ENCODE measurements at regions of chr2 and their contacts with region 1.

Region 1: DNA sequence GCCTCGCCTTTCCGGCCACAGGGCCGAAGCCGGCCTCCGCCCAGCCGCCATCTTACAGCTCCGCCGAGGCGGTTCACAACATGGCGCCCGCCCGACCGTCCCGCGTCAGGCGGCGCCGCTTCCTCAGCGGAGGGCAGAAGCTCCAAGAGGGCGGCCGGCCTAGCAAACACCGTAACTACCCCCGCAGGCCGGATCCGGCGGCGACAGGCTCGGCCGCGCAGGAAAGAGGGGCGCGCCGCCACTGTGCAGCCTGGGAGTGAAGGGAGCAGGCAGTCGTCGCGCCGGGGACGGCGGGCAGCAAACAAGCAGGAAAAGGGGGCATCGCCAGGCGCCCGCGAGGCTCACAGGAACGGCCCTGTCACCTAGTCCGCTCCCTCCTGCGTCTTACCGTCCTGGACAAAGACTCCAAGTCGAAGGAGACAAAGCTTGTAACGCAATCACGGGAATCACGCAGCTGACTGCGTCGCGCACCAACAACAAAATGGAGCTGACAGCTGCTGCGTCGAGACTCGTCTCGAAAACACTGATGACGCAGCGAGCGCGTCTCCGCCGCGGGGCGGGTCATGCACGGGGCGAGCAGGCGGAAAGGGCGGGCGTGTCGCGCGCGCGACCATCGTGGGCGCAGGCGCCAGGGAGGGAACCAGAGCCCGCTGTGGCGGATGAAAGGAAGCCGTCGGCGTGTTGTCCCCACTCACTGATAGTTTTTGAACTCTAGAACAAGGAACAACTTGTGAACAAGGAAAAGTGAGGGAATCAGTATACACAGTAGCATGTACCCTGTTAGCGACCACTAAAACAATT is at the start of gene CLK1:
- DNase-seq: peak in 1 of 2 experiments; percentile 89
- H3K4me3 ChIP-seq: peak within 1 kb of the TSS; percentile 87 to 99 (median 94)
- H3K27ac ChIP-seq: peak within 1 kb of the TSS; percentile 95
- H3K4me1 ChIP-seq: peaks cover 0 to 5% (median 0%) of the 10 kb centered on the region in 4 experiments; a peak in 1 of 7 replicates
- H3K27me3 ChIP-seq: no peaks in the 10 kb centered on the region; a peak in 1 of 7 replicates
- CTCF ChIP-seq: no peak
- EP300 ChIP-seq: no peak; a peak in 1 of 3 replicates
- POLR2A ChIP-seq: peak; percentile 89 to 94
- RAD21 ChIP-seq: no peak
- total RNA-seq, gene CLK1: 33.9 and 35.2 TPM in 2 replicates

Region 2: DNA sequence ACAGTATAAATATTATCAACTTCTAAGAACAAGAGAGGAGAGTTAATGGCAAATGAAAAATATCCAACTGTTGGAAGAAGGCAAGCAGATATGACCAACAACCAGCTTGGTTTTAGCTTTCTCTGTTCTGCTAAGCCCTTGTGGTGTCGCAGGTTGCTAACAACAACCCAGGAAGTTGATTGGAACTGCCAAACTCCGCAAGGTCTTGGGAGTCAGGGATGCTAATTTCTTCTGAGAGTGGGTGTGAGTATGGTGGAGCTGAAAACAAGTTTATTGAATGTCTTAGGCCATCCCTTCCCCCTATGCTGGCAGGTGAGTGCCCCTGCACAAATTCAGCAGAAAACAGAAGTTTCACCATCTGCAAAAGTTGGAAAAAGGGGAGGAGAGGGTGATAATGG is 35.1 kb before region 1 on chr2:
- CTCF ChIA-PET with region 1: interaction called, 3 read pairs
- POLR2A ChIA-PET with region 1: interaction called, 12 read pairs
- DNase-seq: no peak
- H3K4me3 ChIP-seq: no peak overlapping the region
- H3K27ac ChIP-seq: no peak overlapping the region
- H3K4me1 ChIP-seq: no peaks in the 10 kb centered on the region
- H3K27me3 ChIP-seq: no peaks in the 10 kb centered on the region
- CTCF ChIP-seq: no peak
- EP300 ChIP-seq: no peak
- POLR2A ChIP-seq: 0 out of 3 replicates have a peak, but pooled peaks of 1 of the 2 experiments have one; percentile 7
- RAD21 ChIP-seq: no peak

Region 3: GRCh38 chr2:200839513-200839912 is 24.9 kb before region 1 on chr2:
- CTCF ChIA-PET with region 1: no interaction called
- POLR2A ChIA-PET with region 1: interaction called, 10 read pairs
- DNase-seq: no peak
- H3K4me3 ChIP-seq: no peak overlapping the region; a peak in 1 of 8 replicates
- H3K27ac ChIP-seq: no peak overlapping the region
- H3K4me1 ChIP-seq: peaks cover 0 to 4% (median 3%) of the 10 kb centered on the region in 4 experiments; a peak in 4 of 7 replicates
- H3K27me3 ChIP-seq: no peaks in the 10 kb centered on the region
- CTCF ChIP-seq: no peak
- EP300 ChIP-seq: no peak
- POLR2A ChIP-seq: no peak
- RAD21 ChIP-seq: no peak

Region 4: GRCh38 chr2:200850512-200851256 is 13.7 kb before region 1 on chr2:
- CTCF ChIA-PET with region 1: interaction called, 4 read pairs
- POLR2A ChIA-PET with region 1: interaction called, 14 read pairs
- DNase-seq: no peak
- H3K4me3 ChIP-seq: no peak overlapping the region
- H3K27ac ChIP-seq: no peak overlapping the region
- H3K4me1 ChIP-seq: no peaks in the 10 kb centered on the region
- H3K27me3 ChIP-seq: no peaks in the 10 kb centered on the region
- CTCF ChIP-seq: no peak
- EP300 ChIP-seq: no peak
- POLR2A ChIP-seq: no peak
- RAD21 ChIP-seq: peak in 1 of 2 experiments; percentile 10; a peak in 2 of 4 replicates

Region 5: DNA sequence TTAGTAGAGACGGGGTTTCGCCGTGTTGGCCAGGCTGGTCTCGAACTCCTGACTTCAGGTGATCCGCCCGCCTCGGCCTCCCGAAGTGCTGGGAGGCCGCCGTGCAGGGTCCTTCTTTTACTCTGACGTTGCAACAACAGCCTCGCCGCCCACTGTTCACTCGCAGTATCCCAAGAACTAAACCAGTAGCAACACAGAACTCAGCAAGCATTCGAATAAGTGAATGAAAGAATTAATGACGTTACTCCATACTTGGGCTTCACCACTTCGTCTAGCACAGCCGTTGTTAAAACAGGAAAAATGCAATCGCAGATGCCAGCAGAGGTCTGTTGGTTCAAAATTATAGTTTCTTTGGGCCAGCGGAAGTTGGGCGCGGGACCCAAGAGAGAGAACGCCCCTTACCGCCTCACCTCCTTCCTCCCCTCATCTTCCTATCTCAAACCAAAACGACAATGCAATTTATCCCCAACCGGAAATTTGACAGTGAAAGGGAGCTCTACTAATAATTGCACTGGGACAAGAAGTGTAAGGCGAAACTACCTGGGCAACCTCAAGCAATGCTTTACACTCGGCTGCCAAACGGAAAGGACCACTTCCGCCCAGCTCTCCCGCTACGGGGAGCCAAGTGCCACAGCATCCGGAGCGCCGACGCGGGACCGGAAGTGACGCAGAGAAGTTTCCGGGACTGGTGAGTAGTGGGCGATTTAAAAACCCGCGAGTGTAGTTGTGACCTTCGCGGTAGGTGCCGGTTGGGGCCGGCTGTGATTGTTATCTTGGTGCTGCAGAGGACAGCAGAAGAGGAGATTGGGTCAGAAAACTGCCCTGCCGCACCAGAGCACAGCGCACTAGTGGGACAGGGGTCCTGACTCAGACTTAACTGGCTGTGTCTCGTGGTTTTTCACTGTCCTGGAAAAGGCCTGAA is 24.6 kb after region 1 on chr2 and contains the starts of genes NIF3L1 and PPIL3:
- CTCF ChIA-PET with region 1: interaction called, 4 read pairs
- POLR2A ChIA-PET with region 1: interaction called, 53 read pairs
- DNase-seq: peak; percentile 92 to 94
- H3K4me3 ChIP-seq: peak within 1 kb of the TSS; percentile 81 to 100 (median 93)
- H3K27ac ChIP-seq: peak within 1 kb of the TSS; percentile 97
- H3K4me1 ChIP-seq: no peaks in the 10 kb centered on the region
- H3K27me3 ChIP-seq: no peaks in the 10 kb centered on the region
- CTCF ChIP-seq: no peak
- EP300 ChIP-seq: peak in 1 of 2 experiments; percentile 70; a peak in 1 of 3 replicates
- POLR2A ChIP-seq: peak; percentile 82 to 85; a peak in 2 of 3 replicates
- RAD21 ChIP-seq: no peak
- total RNA-seq, gene NIF3L1: 63.4 and 65.1 TPM in 2 replicates
- total RNA-seq, gene PPIL3: 30.4 and 34.1 TPM in 2 replicates

Measured in H1 (cell line).